Naive thymus-derived CD4-positive, alpha-beta T cell (primary cell): ENCODE measurements at regions of chr4 and their contacts with region 1.

Region 1: GRCh38 chr4:99405433-99406115 is 29.6 kb downstream of the ADH7 start:
- DNase-seq: peak; percentile 13 to 62 (median 44)
- ATAC-seq: peak; percentile 86
- H3K4me3 ChIP-seq: no peak overlapping the region
- H3K4me3 Mint-ChIP-seq: no peak overlapping the region
- H3K27ac ChIP-seq: no peak overlapping the region
- H3K27ac Mint-ChIP-seq: no peak overlapping the region
- H3K4me1 ChIP-seq: no peaks in the 10 kb centered on the region
- H3K4me1 Mint-ChIP-seq: peaks cover 0 to 19% (median 0%) of the 10 kb centered on the region in 7 donors
- H3K27me3 ChIP-seq: no peaks in the 10 kb centered on the region
- H3K27me3 Mint-ChIP-seq: peaks cover 0 to 3% (median 0%) of the 10 kb centered on the region in 5 donors

Region 2: GRCh38 chr4:98150092-98150761 is 1255.3 kb before region 1 on chr4:
- CTCF ChIA-PET with region 1: no interaction called
- POLR2A ChIA-PET with region 1: no interaction called
- intact Hi-C with region 1: loop called (anchors 1 kb)
- DNase-seq: peak in 1 of 9 donors; percentile 11
- ATAC-seq: no peak
- H3K4me3 ChIP-seq: no peak overlapping the region
- H3K4me3 Mint-ChIP-seq: no peak overlapping the region
- H3K27ac ChIP-seq: no peak overlapping the region
- H3K27ac Mint-ChIP-seq: peak overlapping the region in 2 of 9 donors; percentile 5 to 68
- H3K4me1 ChIP-seq: no peaks in the 10 kb centered on the region
- H3K4me1 Mint-ChIP-seq: peaks cover 0 to 14% (median 5%) of the 10 kb centered on the region in 7 donors
- H3K27me3 ChIP-seq: no peaks in the 10 kb centered on the region
- H3K27me3 Mint-ChIP-seq: peaks cover 0 to 11% (median 0%) of the 10 kb centered on the region in 5 donors

Region 3: DNA sequence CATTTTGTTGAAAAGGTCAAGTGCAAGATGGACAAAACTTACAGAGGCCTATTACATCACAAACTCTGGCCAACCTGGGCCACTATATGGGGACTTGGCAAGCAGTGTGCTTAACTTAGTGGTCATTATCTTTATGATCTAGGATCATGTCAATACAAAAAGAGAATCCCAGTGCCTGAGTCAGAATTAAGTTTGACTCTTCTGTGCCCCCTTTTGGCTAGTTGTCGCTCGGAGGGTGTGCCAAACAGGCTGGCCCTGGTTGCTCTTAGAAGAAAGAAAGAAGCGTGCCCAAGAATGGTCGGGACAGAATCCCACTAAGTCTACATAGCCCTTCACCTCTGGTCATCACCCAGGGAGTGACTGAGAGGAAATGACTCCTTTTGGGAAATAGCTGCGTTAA is 576.8 kb before region 1 on chr4:
- CTCF ChIA-PET with region 1: no interaction called
- POLR2A ChIA-PET with region 1: no interaction called
- intact Hi-C with region 1: loop called in 1 of 2 experiments (anchors 2 kb)
- DNase-seq: peak in 5 of 9 donors; percentile 16 to 40 (median 20)
- ATAC-seq: no peak
- H3K4me3 ChIP-seq: no peak overlapping the region
- H3K4me3 Mint-ChIP-seq: no peak overlapping the region
- H3K27ac ChIP-seq: no peak overlapping the region
- H3K27ac Mint-ChIP-seq: no peak overlapping the region
- H3K4me1 ChIP-seq: no peaks in the 10 kb centered on the region
- H3K4me1 Mint-ChIP-seq: peaks cover 0 to 16% (median 0%) of the 10 kb centered on the region in 7 donors
- H3K27me3 ChIP-seq: no peaks in the 10 kb centered on the region
- H3K27me3 Mint-ChIP-seq: peaks cover 0 to 14% (median 0%) of the 10 kb centered on the region in 5 donors

Region 4: DNA sequence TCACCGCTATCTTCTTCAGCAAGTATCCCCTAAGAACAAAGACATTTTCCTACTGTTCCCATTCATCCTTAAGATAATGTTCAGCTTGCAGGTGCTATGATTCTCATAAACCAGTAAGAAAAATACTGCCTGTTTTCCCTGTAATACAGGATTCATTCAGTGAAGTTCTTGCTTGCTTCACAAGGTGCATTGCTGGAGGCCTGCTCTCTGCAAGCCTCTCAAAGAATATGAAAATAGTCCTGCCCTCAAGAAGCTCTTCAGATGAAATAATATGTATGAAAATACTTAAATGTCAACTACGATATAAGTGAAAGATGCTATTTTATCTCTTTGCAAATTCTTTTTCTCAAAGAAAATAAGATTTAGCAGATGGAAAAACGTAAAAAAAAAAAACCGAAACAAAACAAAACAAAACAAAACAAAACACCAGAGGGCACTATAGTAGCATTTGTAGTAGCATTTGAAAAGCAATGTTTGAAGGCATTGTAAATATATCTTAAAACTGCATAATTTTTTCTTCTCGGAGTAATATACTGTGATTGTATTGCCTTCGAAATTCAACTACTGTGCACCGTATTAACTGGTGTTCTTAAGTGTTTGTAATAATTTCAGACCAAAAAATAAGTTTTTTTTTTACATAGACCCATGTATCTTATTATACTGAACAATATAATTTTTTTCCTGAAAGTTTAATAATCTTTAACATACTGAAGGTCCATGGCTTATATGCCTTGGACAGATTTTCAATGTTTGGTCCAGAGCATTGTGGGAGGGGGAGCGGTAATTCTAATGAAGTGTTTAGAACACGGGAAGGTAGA is 287.5 kb before region 1 on chr4:
- CTCF ChIA-PET with region 1: interaction called, 3 read pairs
- POLR2A ChIA-PET with region 1: no interaction called
- intact Hi-C with region 1: loop called (anchors 1 kb)
- DNase-seq: peak in 3 of 9 donors; percentile 0 to 18 (median 7)
- ATAC-seq: no peak
- H3K4me3 ChIP-seq: no peak overlapping the region
- H3K4me3 Mint-ChIP-seq: no peak overlapping the region
- H3K27ac ChIP-seq: no peak overlapping the region
- H3K27ac Mint-ChIP-seq: peak overlapping the region in 1 of 9 donors; percentile 44
- H3K4me1 ChIP-seq: no peaks in the 10 kb centered on the region
- H3K4me1 Mint-ChIP-seq: no peaks in the 10 kb centered on the region
- H3K27me3 ChIP-seq: no peaks in the 10 kb centered on the region
- H3K27me3 Mint-ChIP-seq: peaks cover 0 to 7% (median 0%) of the 10 kb centered on the region in 5 donors

Region 5: DNA sequence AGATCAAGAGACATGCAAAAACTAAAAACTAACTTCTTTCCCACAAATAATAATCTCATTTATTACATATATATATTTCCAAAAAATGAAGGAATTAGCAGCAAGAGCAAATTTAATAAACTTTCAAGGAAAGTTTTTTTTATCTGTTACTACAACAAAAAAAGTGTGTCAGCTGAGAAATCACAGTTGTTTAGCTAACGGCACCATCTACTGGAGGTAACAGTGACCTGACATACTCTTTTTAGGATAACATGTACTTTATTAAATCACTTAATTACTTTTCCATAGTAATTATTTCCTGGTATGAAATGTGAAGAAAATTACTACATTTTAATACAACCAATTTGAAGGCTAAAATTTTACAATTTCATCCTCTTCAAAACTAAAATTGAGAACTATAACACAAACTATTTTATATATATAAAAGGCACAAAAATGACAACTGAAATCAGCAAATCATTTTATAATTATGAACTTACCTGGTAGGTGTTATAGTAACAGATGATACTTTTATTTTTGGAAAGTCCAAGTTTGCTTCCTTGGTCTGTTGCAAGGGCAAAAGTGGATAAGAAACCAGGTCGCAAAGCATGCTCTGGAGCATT is 479.6 kb after region 1 on chr4:
- CTCF ChIA-PET with region 1: no interaction called
- POLR2A ChIA-PET with region 1: no interaction called
- intact Hi-C with region 1: loop called in 1 of 2 experiments (anchors 5 kb)
- DNase-seq: peak in 7 of 9 donors; percentile 34 to 64 (median 54)
- ATAC-seq: peak; percentile 72
- H3K4me3 ChIP-seq: no peak overlapping the region
- H3K4me3 Mint-ChIP-seq: no peak overlapping the region
- H3K27ac ChIP-seq: no peak overlapping the region
- H3K27ac Mint-ChIP-seq: no peak overlapping the region
- H3K4me1 ChIP-seq: peaks cover 0 to 2% of the 10 kb centered on the region in 2 donors
- H3K4me1 Mint-ChIP-seq: peaks cover 0 to 19% (median 13%) of the 10 kb centered on the region in 7 donors
- H3K27me3 ChIP-seq: no peaks in the 10 kb centered on the region
- H3K27me3 Mint-ChIP-seq: no peaks in the 10 kb centered on the region